ENCODE measurements at regions of chr11 and their contacts with region 1.

Region 1: GRCh38 chr11:35237860-35238715 is 99.1 kb downstream of the CD44 start:
- DNase-seq: no peak

Region 2: DNA sequence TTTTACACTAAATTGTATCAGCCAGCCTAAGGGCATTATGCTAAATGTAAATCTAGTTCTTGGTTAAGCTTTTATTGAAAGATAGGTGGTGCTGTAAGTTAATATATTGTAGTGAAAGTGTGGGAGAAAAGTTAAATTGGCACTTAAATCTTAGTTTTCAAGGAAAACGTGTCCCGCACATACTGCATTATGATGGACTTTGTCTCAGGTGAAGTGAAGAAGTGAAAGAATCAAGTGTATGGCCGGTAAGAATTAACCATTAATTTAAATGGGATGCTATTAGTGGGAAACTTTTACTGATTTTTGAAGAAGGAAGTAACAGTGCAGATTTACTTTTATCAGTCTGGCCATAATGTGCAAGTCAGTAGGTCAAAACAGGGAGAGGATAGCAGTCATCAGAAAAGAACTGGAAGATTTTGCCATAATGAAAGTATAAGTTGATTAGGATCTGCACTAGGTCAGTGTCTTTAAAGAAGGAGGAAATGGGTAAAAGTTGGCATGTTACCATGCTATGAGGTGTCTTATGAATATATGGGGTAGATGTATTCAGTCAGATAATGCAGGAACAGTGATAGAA is 240.0 kb before region 1 on chr11:
- intact Hi-C with region 1: loop called (anchors 5 kb)
- DNase-seq: no peak